Calu3 (cell line): ENCODE measurements at regions of chr11 and their contacts with region 1.

Region 1: DNA sequence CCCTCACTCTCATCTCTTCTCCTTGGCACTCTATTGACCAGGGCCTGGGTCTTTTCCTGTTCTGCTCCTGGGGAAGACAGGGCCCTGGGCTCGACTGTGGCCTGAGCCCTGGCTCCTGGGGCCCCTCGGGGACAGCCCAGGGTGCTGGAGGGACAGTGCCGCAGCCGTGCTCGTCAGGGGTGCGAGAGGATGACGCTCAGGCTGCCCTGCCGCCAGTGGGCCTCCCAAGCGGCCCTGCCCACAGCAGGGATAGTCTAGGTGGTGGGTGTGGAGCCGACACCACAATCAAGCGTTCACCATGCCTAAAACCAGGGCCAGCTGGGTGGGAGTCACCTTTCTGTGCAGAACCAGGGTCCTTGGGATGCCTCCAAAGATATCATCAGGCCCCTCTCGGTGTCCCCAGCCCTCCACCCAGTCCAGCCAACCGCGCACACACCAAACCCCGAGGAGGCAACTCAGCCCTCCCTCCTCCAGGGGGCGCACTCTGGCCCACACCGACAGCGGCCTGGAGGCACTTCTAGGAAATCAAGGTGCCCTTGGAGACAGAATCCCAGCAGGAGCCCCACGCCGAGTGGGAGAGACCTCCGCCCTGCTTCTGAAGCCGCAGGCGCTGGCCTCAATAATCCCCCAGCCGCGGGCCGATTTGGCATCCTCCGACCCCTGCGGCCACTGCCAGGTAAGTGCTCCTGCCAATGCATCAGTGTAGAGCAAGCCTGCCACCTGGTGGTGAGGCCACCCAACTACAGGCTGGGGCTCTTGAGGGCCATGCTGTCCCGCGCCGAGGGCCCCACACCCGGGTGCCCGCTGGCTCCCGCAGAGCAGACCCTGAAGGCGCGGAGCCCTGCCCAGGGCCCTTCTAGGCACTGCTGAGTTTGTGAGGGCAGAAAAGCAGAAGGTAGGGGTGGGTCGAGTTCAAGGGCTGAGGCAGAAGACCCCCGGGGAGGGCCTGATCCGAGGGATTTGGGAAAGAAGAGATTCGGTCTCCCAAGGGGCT is 496.4 kb downstream of the BUD13 start:
- DNase-seq: peak; percentile 76
- H3K4me3 Mint-ChIP-seq: no peak overlapping the region
- H3K27ac Mint-ChIP-seq: no peak overlapping the region
- H3K4me1 Mint-ChIP-seq: no peaks in the 10 kb centered on the region
- H3K27me3 Mint-ChIP-seq: peaks cover 26% of the 10 kb centered on the region
- CTCF ChIP-seq: peak; percentile 87

Region 2: GRCh38 chr11:115334932-115335788 is 941.2 kb before region 1 on chr11:
- CTCF ChIA-PET with region 1: no interaction called
- intact Hi-C with region 1: loop called (anchors 2 kb)
- DNase-seq: no peak
- H3K4me3 Mint-ChIP-seq: no peak overlapping the region
- H3K27ac Mint-ChIP-seq: no peak overlapping the region
- H3K4me1 Mint-ChIP-seq: no peaks in the 10 kb centered on the region
- H3K27me3 Mint-ChIP-seq: peaks cover 18% of the 10 kb centered on the region
- CTCF ChIP-seq: no peak

Region 3: GRCh38 chr11:116062490-116063171 is 213.7 kb before region 1 on chr11:
- CTCF ChIA-PET with region 1: no interaction called
- intact Hi-C with region 1: no loop called
- DNase-seq: no peak
- H3K4me3 Mint-ChIP-seq: no peak overlapping the region
- H3K27ac Mint-ChIP-seq: no peak overlapping the region
- H3K4me1 Mint-ChIP-seq: no peaks in the 10 kb centered on the region
- H3K27me3 Mint-ChIP-seq: no peaks in the 10 kb centered on the region
- CTCF ChIP-seq: no peak